Ovary (tissue), 10 donors: ENCODE measurements at regions of chr1 and their contacts with region 1.

Region 1: GRCh38 chr1:57424231-57425027 is 569 bp upstream of the DAB1 start:
- DNase-seq: peak in 1 of 5 donors; percentile 7
- H3K4me3 ChIP-seq: peak overlapping the region; percentile 18
- H3K27ac ChIP-seq: no peak overlapping the region
- H3K4me1 ChIP-seq: no peaks in the 10 kb centered on the region
- H3K27me3 ChIP-seq: no peaks in the 10 kb centered on the region
- CTCF ChIP-seq: no peak
- EP300 ChIP-seq: no peak
- POLR2A ChIP-seq: no peak

Region 2: GRCh38 chr1:57235755-57236510 is 188.5 kb before region 1 on chr1:
- intact Hi-C with region 1: loop called in 1 of 4 experiments (anchors 5 kb)
- DNase-seq: no peak
- H3K4me3 ChIP-seq: no peak overlapping the region
- H3K27ac ChIP-seq: no peak overlapping the region
- H3K4me1 ChIP-seq: no peaks in the 10 kb centered on the region
- H3K27me3 ChIP-seq: no peaks in the 10 kb centered on the region
- CTCF ChIP-seq: no peak
- EP300 ChIP-seq: no peak
- POLR2A ChIP-seq: no peak